Astrocyte of the cerebellum (primary cell): ENCODE measurements at regions of chr9 and their contacts with region 1.

Region 1: GRCh38 chr9:107566611-107567061 is 77.1 kb upstream of the KLF4 start:
- DNase-seq: peak; percentile 28
- H3K4me3 ChIP-seq: no peak overlapping the region
- CTCF ChIP-seq: no peak

Region 2: DNA sequence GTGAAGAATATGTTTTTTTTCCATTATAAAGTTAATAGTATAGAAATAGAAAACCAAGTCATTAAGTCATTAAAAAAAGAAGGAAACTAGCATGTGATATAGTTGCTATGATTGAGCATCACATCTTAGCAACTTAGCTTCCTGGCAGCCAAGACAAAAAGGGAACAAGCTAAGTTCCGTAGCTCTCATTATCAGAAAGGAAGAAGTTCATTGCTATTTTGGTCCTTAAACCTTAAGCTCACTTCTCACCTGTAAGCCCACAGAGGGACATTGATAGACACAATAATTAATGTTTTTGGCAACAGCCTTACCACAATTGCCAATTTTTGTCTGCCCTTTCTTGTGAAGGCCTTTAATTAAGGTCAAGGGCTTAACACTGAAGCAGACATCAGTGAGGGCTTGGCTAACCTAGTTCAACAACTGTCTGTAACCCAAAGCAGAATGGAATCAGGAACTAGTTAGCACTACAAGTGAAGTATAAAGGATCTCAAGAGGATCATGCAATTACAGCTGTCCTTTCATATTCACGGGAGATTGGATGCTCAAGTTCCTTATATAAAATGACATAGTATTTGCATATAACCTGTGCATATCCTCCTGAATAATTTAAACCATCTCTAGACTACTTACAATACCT is 53.1 kb before region 1 on chr9:
- in situ Hi-C with region 1: no loop called
- DNase-seq: no peak
- H3K4me3 ChIP-seq: no peak overlapping the region
- CTCF ChIP-seq: no peak

Region 3: DNA sequence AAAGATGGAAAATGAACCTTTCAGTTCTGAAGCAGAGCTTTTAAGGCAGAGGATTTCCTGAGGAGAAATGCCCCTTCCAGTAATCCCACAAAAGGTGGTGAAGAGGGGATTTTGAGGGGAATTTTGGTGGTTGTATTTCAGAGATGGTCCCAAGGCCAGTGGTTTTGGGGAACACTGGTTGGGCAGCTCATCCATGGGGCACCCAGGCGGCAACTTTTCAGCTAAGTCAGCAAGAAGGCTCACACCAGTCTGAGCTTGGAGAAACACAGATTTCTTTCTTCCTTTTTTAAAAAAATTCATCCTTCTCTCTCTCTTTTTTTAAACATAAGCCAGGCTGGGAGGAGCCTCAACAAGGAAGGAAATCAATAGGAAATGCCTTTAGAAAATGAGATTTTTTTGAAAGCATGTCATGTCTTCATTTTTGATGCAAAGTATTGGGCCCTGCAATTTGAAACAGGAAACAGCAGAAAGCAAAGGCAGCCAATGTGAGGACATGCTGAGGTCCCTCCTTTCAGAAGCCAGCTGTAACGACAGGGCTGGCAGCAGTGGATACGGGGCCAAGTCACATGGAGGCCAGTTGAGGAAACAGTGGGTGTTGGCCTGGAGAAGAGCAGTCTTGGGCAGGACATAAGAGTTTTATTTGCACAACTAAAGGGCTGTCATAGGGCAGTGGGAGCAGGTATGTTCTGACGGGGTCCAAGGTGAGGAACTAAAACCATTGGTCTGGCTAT is 78.3 kb after region 1 on chr9:
- in situ Hi-C with region 1: no loop called
- DNase-seq: no peak
- H3K4me3 ChIP-seq: no peak overlapping the region
- CTCF ChIP-seq: no peak

Region 4: DNA sequence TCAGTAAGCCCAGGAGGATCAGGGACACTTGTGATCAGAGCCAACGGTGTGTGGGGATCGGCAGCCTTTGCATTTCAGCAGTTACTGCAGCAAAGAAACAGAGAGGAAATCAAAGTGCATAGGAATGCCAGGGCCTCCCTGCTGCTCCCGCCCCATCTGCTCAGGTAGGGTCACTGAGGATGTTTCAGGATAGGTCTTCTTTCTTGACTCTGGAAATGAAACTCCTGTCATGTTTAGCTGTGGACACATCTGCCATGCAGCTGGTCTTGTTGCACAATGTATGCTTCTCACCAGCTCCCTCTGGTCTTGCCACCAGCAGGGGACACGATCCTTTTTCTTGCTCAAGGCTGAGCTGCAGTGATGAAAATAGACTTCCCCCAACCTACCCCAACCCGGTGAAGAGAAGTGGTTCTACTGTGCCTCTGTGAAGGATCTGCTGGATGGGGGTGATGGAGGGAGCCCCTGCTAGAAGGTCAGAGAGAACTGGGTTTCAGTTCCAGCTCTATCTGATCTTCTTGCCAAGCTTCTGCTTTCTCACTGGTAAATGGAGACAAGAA is 108.2 kb after region 1 on chr9:
- in situ Hi-C with region 1: loop called (anchors 5 kb)
- DNase-seq: no peak
- H3K4me3 ChIP-seq: no peak overlapping the region
- CTCF ChIP-seq: no peak